ENCODE measurements at regions of chr6 and their contacts with region 1.

Region 1: GRCh38 chr6:109382576-109383437 is 540 bp upstream of the CD164 start:
- DNase-seq: peak; percentile 94
- H3K4me3 Mint-ChIP-seq: peak overlapping the region; percentile 93
- H3K27ac Mint-ChIP-seq: peak overlapping the region; percentile 99
- H3K4me1 Mint-ChIP-seq: peaks cover 28% of the 10 kb centered on the region
- H3K27me3 Mint-ChIP-seq: peaks cover 3% of the 10 kb centered on the region

Region 2: GRCh38 chr6:109236115-109237076 is 146.4 kb before region 1 on chr6:
- CTCF ChIA-PET with region 1: interaction called, 3 read pairs
- POLR2A ChIA-PET with region 1: interaction called, 15 read pairs
- DNase-seq: no peak
- H3K4me3 Mint-ChIP-seq: no peak overlapping the region
- H3K27ac Mint-ChIP-seq: peak overlapping the region; percentile 57
- H3K4me1 Mint-ChIP-seq: peaks cover 20% of the 10 kb centered on the region
- H3K27me3 Mint-ChIP-seq: no peaks in the 10 kb centered on the region

Region 3: GRCh38 chr6:109440331-109441068 is 57.7 kb after region 1 on chr6 and contains the starts of genes PPIL6 and SMPD2:
- CTCF ChIA-PET with region 1: interaction called, 13 read pairs
- POLR2A ChIA-PET with region 1: interaction called, 77 read pairs
- DNase-seq: peak; percentile 81
- H3K4me3 Mint-ChIP-seq: peak within 1 kb of the TSS; percentile 90
- H3K27ac Mint-ChIP-seq: peak within 1 kb of the TSS; percentile 75
- H3K4me1 Mint-ChIP-seq: peaks cover 32% of the 10 kb centered on the region
- H3K27me3 Mint-ChIP-seq: peaks cover 4% of the 10 kb centered on the region
- total RNA-seq, gene PPIL6: not detected
- total RNA-seq, gene SMPD2: 15.9 to 16.9 TPM

Region 4: DNA sequence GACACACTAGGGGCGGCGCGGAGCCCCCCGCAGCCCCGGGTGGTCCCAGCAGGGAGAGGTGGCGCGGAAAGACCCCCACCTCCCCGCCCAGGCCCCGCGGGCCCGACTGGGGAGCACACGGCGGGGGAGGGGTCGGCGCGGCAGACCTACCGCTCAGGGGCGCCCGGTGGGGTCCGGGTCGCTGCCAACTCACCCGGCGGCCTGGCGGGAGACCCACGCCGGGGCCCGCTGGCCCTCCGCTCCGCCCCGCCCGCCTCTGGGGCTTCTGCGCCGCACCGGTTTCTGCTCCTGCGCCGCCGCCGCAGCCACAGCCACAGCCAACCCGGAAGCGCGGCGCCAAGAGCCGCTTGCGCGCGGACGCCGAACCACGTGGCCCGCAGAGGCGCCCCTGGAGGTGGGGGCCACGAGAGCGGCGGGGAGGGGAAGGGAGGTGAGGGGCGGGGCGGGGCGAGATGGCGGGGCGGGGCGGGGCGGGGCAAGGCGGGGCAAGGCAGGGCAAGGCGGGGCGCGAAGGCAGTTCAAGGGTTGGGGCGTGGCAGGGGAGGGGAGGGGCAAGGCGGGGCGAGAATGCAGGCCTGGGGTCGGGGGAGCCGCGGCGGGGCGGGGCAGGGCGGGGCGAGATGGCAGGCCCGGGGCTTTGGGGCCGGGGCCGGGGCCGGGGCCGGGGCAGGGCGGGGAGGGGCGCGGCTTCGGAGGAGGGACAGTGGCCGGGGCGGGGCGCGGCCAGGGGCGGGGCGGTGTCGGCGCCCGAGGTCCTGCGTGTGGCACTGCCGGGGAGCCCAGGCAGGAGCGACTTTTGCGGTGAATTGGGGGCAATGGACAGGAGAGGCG is 100.3 kb after region 1 on chr6 and contains the start of gene ZBTB24:
- CTCF ChIA-PET with region 1: interaction called, 5 read pairs
- POLR2A ChIA-PET with region 1: interaction called, 25 read pairs
- DNase-seq: peak; percentile 91
- H3K4me3 Mint-ChIP-seq: peak within 1 kb of the TSS; percentile 98
- H3K27ac Mint-ChIP-seq: peak within 1 kb of the TSS; percentile 88
- H3K4me1 Mint-ChIP-seq: peaks cover 46% of the 10 kb centered on the region
- H3K27me3 Mint-ChIP-seq: peaks cover 2% of the 10 kb centered on the region
- total RNA-seq, gene ZBTB24: 16.5 to 17.5 TPM

Region 5: DNA sequence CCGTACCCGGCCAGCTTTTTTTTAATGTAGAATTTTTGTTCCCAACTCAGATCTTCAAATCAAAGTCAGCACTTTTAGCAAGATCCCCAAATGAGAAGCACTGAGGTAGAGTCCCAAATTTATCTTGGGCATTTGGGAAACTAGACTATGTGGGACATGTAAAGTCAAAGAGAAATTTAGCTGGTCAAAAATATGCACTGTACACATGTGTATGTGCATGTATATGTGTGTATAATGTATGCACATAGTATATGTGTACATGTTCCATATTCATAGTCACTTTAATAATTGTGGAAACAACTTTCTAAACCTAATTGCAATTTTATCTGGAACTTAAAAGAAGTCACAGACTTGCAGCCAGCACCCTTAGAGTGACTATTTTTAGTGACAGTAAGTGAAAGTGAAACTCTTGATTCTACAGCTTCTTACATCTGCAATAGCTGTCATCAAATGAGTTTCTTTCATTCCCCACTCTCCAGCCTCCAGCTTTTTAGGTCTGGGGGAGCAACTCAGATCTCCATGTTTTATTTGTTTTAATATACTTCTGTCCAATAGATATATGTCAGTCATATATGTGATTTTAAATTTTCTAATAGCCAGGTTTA is 851.1 kb after region 1 on chr6:
- CTCF ChIA-PET with region 1: no interaction called
- POLR2A ChIA-PET with region 1: no interaction called
- DNase-seq: no peak
- H3K4me3 Mint-ChIP-seq: no peak overlapping the region
- H3K27ac Mint-ChIP-seq: no peak overlapping the region
- H3K4me1 Mint-ChIP-seq: peaks cover 7% of the 10 kb centered on the region
- H3K27me3 Mint-ChIP-seq: no peaks in the 10 kb centered on the region